ENCODE measurements at regions of chr7 and their contacts with region 1.

Region 1: GRCh38 chr7:24290004-24290641 is 6.1 kb downstream of the NPY start:
- DNase-seq: peak; percentile 59
- H3K4me3 Mint-ChIP-seq: no peak overlapping the region
- H3K27ac Mint-ChIP-seq: no peak overlapping the region
- H3K4me1 Mint-ChIP-seq: peaks cover 13% of the 10 kb centered on the region
- H3K27me3 Mint-ChIP-seq: peaks cover 48% of the 10 kb centered on the region
- CTCF ChIP-seq: peak; percentile 54

Region 2: DNA sequence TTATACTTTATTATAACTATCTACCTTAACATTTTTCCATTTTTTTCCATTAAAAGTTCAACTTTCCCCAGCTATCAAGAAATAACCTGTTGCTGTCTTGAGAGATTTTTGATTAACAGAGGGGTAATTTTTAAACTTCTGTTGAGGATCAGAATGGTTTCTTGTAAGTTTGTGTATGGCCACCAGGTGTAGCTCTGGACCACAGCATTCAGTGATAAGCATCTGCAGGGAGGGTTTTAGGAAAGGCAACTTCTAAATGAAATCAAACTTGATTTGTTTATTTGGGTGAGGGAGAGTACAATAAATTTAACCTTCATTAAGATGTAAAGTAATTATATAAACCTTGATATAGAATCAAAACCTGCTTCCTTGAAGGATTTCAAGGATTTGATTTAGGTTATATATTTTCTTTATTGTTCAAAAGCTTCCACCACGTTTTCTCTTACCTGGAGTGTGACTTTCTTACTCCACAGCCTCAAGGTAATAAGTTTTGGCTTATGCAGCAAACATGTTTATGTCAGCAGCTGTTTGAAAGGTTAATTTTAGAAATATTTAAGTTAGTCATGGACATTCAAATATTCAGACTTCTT is 426.8 kb before region 1 on chr7:
- CTCF ChIA-PET with region 1: no interaction called
- intact Hi-C with region 1: loop called (anchors 2 kb)
- DNase-seq: peak; percentile 36
- H3K4me3 Mint-ChIP-seq: no peak overlapping the region
- H3K27ac Mint-ChIP-seq: no peak overlapping the region
- H3K4me1 Mint-ChIP-seq: peaks cover 13% of the 10 kb centered on the region
- H3K27me3 Mint-ChIP-seq: no peaks in the 10 kb centered on the region
- CTCF ChIP-seq: peak; percentile 75

Region 3: DNA sequence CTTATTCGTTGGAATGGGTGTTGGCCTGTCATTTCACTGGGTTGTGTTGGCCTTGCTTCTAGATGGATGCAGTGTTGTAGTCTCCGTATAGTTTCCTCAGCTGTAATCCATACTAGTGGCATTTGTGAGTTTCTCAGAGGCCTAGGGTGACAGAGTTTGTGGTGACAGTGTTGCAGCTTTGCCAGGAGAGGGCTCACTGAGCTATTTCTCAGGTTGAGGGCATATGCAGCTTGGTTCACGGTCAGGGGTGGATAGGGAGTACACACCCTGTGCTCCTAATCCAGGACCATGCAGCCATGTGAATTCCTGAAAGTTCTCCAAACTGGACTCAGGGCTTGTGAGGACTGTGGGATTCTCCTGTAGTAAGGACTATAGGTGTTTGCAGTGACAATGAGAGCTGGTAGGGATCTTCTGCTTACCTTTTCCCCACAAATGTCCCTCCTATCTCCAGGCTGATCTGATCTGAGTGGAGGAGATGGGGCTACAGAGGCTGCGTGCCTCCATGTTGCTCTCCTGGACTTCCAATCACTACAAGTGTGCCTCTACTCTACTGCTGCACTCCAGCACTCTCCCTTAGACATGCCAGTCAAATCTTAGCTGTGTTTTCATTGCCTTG is 351.1 kb before region 1 on chr7:
- CTCF ChIA-PET with region 1: no interaction called
- intact Hi-C with region 1: loop called (anchors 5 kb)
- DNase-seq: peak; percentile 74
- H3K4me3 Mint-ChIP-seq: no peak overlapping the region
- H3K27ac Mint-ChIP-seq: no peak overlapping the region
- H3K4me1 Mint-ChIP-seq: no peaks in the 10 kb centered on the region
- H3K27me3 Mint-ChIP-seq: peaks cover 64% of the 10 kb centered on the region
- CTCF ChIP-seq: peak; percentile 79

Region 4: GRCh38 chr7:24381894-24382505 is 91.9 kb after region 1 on chr7:
- CTCF ChIA-PET with region 1: interaction called, 3 read pairs
- intact Hi-C with region 1: loop called (anchors 1 kb)
- DNase-seq: no peak
- H3K4me3 Mint-ChIP-seq: no peak overlapping the region
- H3K27ac Mint-ChIP-seq: no peak overlapping the region
- H3K4me1 Mint-ChIP-seq: peaks cover 13% of the 10 kb centered on the region
- H3K27me3 Mint-ChIP-seq: peaks cover 71% of the 10 kb centered on the region
- CTCF ChIP-seq: peak; percentile 78

Region 5: GRCh38 chr7:24587848-24588247 is 297.7 kb after region 1 on chr7:
- CTCF ChIA-PET with region 1: interaction called, 3 read pairs
- intact Hi-C with region 1: loop called (anchors 5 kb)
- DNase-seq: peak; percentile 66
- H3K4me3 Mint-ChIP-seq: no peak overlapping the region
- H3K27ac Mint-ChIP-seq: no peak overlapping the region
- H3K4me1 Mint-ChIP-seq: peaks cover 28% of the 10 kb centered on the region
- H3K27me3 Mint-ChIP-seq: no peaks in the 10 kb centered on the region
- CTCF ChIP-seq: peak; percentile 77

Measured in Calu3 (cell line).